ENCODE measurements at regions of chr7 and their contacts with region 1.

Region 1: DNA sequence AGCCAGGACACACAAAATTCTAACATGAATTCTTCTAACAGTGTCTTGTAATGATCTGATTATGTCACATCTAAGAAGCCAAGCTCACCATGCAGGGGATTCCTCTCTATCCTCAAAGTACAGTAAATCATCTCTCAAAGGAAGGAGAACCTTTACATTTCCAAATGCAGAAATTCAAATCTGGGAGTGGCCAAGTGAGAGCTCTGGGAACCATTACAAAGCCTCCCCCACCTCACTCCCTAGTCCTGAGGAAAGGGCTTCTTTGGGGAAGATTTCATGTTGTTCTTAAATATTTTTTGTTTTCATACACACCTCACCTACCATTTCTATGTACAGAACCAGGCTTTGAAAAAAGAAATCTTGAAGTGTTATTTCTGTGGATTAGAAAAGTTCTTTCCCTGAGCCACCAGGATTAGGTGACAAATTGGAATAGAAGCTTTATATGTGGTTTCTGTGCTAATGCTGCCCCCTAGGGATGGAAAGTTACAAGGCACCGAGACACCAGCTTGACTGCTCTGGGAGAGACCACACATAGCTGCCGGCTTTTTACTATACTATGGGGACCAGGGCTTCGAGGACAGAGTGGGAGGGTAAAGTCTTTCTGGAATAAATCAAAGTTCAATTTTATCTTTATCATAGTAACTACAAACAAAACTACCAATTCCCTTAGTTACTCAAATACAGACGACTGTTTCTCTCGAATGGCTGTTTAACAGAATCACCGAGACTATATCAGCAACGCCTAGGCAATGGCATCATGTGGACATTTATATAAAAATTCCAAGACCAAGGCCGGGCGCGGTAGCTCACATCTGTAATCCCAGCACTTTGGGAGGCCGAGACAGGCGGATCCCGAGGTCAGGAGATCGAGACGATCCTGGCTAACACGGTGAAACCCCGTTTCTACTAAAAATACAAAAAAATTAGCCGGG is 116.1 kb downstream of the RNF216 start:
- DNase-seq: peak; percentile 64 to 81
- H3K4me3 ChIP-seq: no peak overlapping the region
- H3K27ac ChIP-seq: no peak overlapping the region
- H3K4me1 ChIP-seq: peaks cover 0 to 9% (median 4%) of the 10 kb centered on the region in 4 experiments; a peak in 6 of 7 replicates
- H3K27me3 ChIP-seq: no peaks in the 10 kb centered on the region
- CTCF ChIP-seq: peak; percentile 61 to 90 (median 84)
- EP300 ChIP-seq: no peak
- POLR2A ChIP-seq: no peak
- RAD21 ChIP-seq: peak; percentile 92 to 93

Region 2: GRCh38 chr7:5494683-5495561 is 170.4 kb before region 1 on chr7:
- CTCF ChIA-PET with region 1: interaction called, 36 read pairs
- POLR2A ChIA-PET with region 1: interaction called, 7 read pairs
- DNase-seq: peak in 1 of 2 experiments; percentile 88
- H3K4me3 ChIP-seq: no peak overlapping the region
- H3K27ac ChIP-seq: no peak overlapping the region
- H3K4me1 ChIP-seq: peaks cover 0 to 20% (median 12%) of the 10 kb centered on the region in 4 experiments; a peak in 5 of 7 replicates
- H3K27me3 ChIP-seq: no peaks in the 10 kb centered on the region
- CTCF ChIP-seq: peak in 2 of 3 experiments; percentile 87 to 93; a peak in 3 of 4 replicates
- EP300 ChIP-seq: no peak
- POLR2A ChIP-seq: no peak
- RAD21 ChIP-seq: peak; percentile 94 to 95

Region 3: GRCh38 chr7:5586279-5586962 is 78.9 kb before region 1 on chr7:
- CTCF ChIA-PET with region 1: interaction called, 12 read pairs
- POLR2A ChIA-PET with region 1: interaction called, 4 read pairs
- DNase-seq: no peak
- H3K4me3 ChIP-seq: no peak overlapping the region
- H3K27ac ChIP-seq: no peak overlapping the region; the same call in 1 of the 2 replicates
- H3K4me1 ChIP-seq: peaks cover 0 to 2% (median 0%) of the 10 kb centered on the region in 4 experiments; a peak in 2 of 7 replicates
- H3K27me3 ChIP-seq: peaks cover 0 to 2% (median 0%) of the 10 kb centered on the region in 4 experiments; a peak in 3 of 7 replicates
- CTCF ChIP-seq: peak in 1 of 3 experiments; percentile 2; a peak in 1 of 4 replicates
- EP300 ChIP-seq: no peak
- POLR2A ChIP-seq: no peak
- RAD21 ChIP-seq: no peak

Region 4: GRCh38 chr7:5615190-5616070 is 49.9 kb before region 1 on chr7:
- CTCF ChIA-PET with region 1: interaction called, 30 read pairs
- POLR2A ChIA-PET with region 1: interaction called, 5 read pairs
- DNase-seq: no peak
- H3K4me3 ChIP-seq: no peak overlapping the region
- H3K27ac ChIP-seq: no peak overlapping the region
- H3K4me1 ChIP-seq: peaks cover 0 to 4% (median under 1%) of the 10 kb centered on the region in 4 experiments; a peak in 3 of 7 replicates
- H3K27me3 ChIP-seq: no peaks in the 10 kb centered on the region
- CTCF ChIP-seq: no peak
- EP300 ChIP-seq: no peak
- POLR2A ChIP-seq: no peak
- RAD21 ChIP-seq: no peak

Region 5: GRCh38 chr7:5636914-5637313 is 28.4 kb before region 1 on chr7:
- CTCF ChIA-PET with region 1: interaction called, 90 read pairs
- POLR2A ChIA-PET with region 1: interaction called, 5 read pairs
- DNase-seq: no peak
- H3K4me3 ChIP-seq: no peak overlapping the region
- H3K27ac ChIP-seq: no peak overlapping the region
- H3K4me1 ChIP-seq: peaks cover 14 to 33% (median 21%) of the 10 kb centered on the region in 4 experiments
- H3K27me3 ChIP-seq: no peaks in the 10 kb centered on the region
- CTCF ChIP-seq: no peak
- EP300 ChIP-seq: no peak
- POLR2A ChIP-seq: no peak
- RAD21 ChIP-seq: no peak

Region 6: DNA sequence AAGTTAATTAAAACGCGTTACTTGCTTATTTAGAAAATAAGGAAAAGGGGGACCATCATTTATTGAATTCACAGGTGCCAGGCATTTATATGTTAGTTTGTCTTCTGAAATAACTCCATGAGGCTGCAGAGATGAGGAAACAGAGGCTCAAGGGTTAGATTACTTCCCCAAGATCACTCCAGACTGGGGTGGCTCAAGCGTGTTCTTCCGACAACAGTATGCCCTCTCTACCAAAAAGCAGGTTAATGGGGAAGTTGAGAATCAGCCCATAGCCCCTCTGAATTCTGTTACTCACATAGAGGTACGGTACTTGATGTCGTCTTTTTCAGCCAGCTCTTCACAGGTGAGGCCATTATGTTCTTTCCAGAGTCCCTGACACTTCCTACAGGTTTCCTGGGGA is 13.2 kb before region 1 on chr7:
- CTCF ChIA-PET with region 1: interaction called, 36 read pairs
- POLR2A ChIA-PET with region 1: interaction called, 5 read pairs
- DNase-seq: no peak
- H3K4me3 ChIP-seq: no peak overlapping the region
- H3K27ac ChIP-seq: no peak overlapping the region
- H3K4me1 ChIP-seq: peaks cover 0 to 8% (median 0%) of the 10 kb centered on the region in 4 experiments; a peak in 2 of 7 replicates
- H3K27me3 ChIP-seq: no peaks in the 10 kb centered on the region
- CTCF ChIP-seq: no peak
- EP300 ChIP-seq: no peak
- POLR2A ChIP-seq: no peak
- RAD21 ChIP-seq: no peak

Region 7: GRCh38 chr7:5694912-5695726 is 29.8 kb after region 1 on chr7:
- CTCF ChIA-PET with region 1: interaction called, 13 read pairs
- POLR2A ChIA-PET with region 1: interaction called, 3 read pairs
- DNase-seq: no peak
- H3K4me3 ChIP-seq: no peak overlapping the region
- H3K27ac ChIP-seq: no peak overlapping the region
- H3K4me1 ChIP-seq: no peaks in the 10 kb centered on the region
- H3K27me3 ChIP-seq: no peaks in the 10 kb centered on the region
- CTCF ChIP-seq: no peak
- EP300 ChIP-seq: no peak
- POLR2A ChIP-seq: no peak
- RAD21 ChIP-seq: no peak